WTC11 (cell line): ENCODE measurements at regions of chr19 and their contacts with region 1.

Region 1: DNA sequence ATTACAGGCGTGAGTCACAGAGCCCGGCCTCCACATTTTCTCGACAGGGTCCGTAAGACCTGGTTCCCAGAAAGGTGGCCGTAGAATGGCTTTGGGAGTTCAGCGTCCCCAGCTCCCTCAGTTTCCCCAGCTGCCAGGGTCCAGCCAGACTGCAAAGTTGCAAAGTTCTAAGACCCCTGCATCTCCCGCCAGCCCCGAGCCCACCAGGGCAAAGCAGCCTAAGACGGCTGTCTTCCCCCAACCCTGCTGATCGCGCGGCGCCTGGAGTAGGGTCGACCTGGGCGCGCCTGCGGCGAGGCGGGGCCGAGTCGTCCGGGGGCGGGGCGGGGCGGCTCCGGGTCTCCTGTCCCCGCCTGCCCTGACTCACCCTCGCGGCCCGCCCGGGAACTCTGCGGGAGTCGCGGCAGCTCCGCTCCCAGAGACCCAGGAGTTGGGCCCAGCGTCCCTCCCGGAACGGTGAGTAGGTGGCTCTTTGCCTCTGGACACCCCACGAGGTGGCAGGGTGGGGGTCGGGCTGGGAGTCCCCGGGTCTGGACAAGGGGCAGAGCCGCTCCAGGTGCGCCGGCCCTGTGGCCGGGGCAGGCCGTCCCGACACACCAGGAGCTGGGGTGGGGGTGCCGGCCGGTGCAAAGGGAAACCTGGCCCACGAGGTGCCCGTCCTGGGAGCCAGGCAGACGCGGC is at the start of gene LRRC8E:
- DNase-seq: peak; percentile 87
- ATAC-seq: peak; percentile 97
- H3K4me3 Mint-ChIP-seq: peak within 1 kb of the TSS; percentile 65
- H3K27ac Mint-ChIP-seq: no peak within 1 kb of the TSS
- H3K4me1 Mint-ChIP-seq: peaks cover 3% of the 10 kb centered on the region
- H3K27me3 Mint-ChIP-seq: peaks cover 56% of the 10 kb centered on the region
- CTCF ChIP-seq: no peak
- total RNA-seq, gene LRRC8E: 3.0 to 3.6 TPM (median 3.1 TPM) in 3 replicates

Region 2: GRCh38 chr19:7903244-7904073 is 15.2 kb after region 1 on chr19 and contains the start of gene MAP2K7:
- CTCF ChIA-PET with region 1: interaction called, 12 read pairs
- POLR2A ChIA-PET with region 1: interaction called, 6 read pairs
- DNase-seq: peak; percentile 100
- ATAC-seq: peak; percentile 87
- H3K4me3 Mint-ChIP-seq: peak within 1 kb of the TSS; percentile 90
- H3K27ac Mint-ChIP-seq: peak within 1 kb of the TSS; percentile 97
- H3K4me1 Mint-ChIP-seq: peaks cover 20% of the 10 kb centered on the region
- H3K27me3 Mint-ChIP-seq: peaks cover 13% of the 10 kb centered on the region
- CTCF ChIP-seq: no peak
- total RNA-seq, gene MAP2K7: 39.4 to 46.9 TPM (median 46.3 TPM) in 3 replicates

Region 3: GRCh38 chr19:7928736-7929701 is 40.7 kb after region 1 on chr19:
- CTCF ChIA-PET with region 1: no interaction called
- POLR2A ChIA-PET with region 1: no interaction called
- DNase-seq: peak; percentile 84
- ATAC-seq: peak; percentile 63
- H3K4me3 Mint-ChIP-seq: no peak overlapping the region
- H3K27ac Mint-ChIP-seq: peak overlapping the region; percentile 70; the same call in 1 of the 2 replicates
- H3K4me1 Mint-ChIP-seq: peaks cover 4% of the 10 kb centered on the region; the same call in 1 of the 2 replicates
- H3K27me3 Mint-ChIP-seq: no peaks in the 10 kb centered on the region
- CTCF ChIP-seq: peak; percentile 71